GM12878 (cell line): ENCODE measurements at regions of chr2 and their contacts with region 1.

Region 1: GRCh38 chr2:72340665-72341064 is 193.0 kb upstream of the CYP26B1 start:
- DNase-seq: no peak
- ATAC-seq: no peak
- H3K4me3 ChIP-seq: no peak overlapping the region
- H3K27ac ChIP-seq: no peak overlapping the region
- H3K4me1 ChIP-seq: no peaks in the 10 kb centered on the region
- H3K27me3 ChIP-seq: no peaks in the 10 kb centered on the region
- CTCF ChIP-seq: no peak
- EP300 ChIP-seq: no peak
- POLR2A ChIP-seq: no peak
- RAD21 ChIP-seq: no peak

Region 2: DNA sequence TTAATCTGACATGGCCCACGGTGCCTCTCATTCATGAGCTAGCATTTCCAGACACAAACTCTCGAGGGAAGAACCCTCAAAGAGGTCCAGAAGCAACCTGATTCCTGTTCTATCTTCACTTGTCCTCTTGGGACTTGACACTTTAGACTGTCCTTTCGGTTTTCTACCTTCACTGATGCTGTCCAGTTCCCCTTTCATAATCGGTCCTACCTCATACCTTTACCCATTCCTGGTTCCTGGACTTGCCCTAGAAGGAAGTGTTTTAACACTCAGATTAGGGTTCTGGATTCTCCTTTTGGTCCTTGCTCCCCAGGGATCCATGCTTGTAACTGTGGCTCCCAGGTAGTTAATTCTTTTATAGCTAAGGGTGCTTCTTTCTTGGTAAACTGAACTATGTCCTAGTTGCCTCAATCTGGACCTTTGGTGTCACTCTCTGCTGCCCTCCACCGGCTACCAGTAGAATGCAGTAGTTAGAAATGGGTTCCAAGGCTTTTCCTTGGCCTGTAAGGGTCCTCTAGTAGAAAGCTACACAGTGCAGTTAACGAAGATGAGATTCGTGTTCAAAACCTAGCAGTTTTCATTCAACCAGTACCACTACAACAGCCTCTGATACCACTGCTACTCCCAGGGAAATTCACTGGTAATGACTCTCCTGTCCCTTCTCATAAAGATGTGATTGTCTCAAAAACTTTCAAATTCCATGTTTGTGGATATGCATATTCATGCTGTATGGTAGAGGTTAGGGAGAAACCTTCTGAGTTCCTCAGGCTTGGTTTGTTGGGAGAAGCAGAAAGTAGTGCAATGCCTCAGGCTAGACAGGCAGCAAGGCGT is 14.9 kb before region 1 on chr2:
- CTCF ChIA-PET with region 1: interaction called, 11 read pairs
- POLR2A ChIA-PET with region 1: no interaction called
- RAD21 ChIA-PET with region 1: no interaction called
- SMC1A ChIA-PET with region 1: interaction called, 3 read pairs
- in situ Hi-C with region 1: no loop called
- intact Hi-C with region 1: no loop called
- DNase-seq: no peak
- ATAC-seq: peak; percentile 85
- H3K4me3 ChIP-seq: no peak overlapping the region
- H3K27ac ChIP-seq: no peak overlapping the region
- H3K4me1 ChIP-seq: no peaks in the 10 kb centered on the region
- H3K27me3 ChIP-seq: no peaks in the 10 kb centered on the region
- CTCF ChIP-seq: peak; percentile 56 to 81 (median 76)
- EP300 ChIP-seq: no peak
- POLR2A ChIP-seq: no peak
- RAD21 ChIP-seq: peak; percentile 49